ENCODE measurements at regions of chr1 and their contacts with region 1.

Region 1: DNA sequence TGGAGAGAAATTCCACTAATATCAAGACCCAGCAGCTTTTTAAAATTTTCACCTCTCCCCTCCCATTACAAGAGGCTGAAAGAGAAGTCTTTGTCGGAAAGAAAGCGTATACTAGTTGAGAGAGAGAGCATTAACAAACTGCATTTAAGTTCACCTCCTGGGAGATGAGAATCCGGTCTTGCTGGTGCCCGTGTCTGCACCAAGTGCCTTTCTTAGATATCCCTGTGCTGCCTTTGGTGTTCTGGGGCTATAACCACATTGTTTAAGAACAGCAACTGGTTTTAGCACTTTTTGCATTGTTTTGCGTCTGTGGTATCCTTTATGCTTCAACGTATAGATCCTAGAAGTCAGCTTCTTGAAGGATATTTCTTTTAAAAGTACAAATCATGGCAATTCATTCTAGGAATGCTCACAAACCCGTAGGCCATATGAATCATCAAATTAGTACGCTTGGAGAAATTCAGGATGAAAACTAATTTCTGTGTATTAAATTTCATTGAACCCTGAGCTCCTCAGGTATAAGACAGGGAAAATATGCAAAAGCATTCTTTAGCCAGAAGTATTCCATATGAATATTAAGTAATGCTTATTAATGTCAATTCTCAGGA is 3.4 kb upstream of the RPE65 start:
- DNase-seq: peak; percentile 83
- ATAC-seq: peak; percentile 31
- H3K4me3 ChIP-seq: no peak overlapping the region
- H3K27ac ChIP-seq: peak overlapping the region; percentile 22; the same call in 1 of the 2 replicates
- H3K4me1 ChIP-seq: peaks cover 20% of the 10 kb centered on the region
- H3K27me3 ChIP-seq: no peaks in the 10 kb centered on the region
- CTCF ChIP-seq: no peak

Region 2: DNA sequence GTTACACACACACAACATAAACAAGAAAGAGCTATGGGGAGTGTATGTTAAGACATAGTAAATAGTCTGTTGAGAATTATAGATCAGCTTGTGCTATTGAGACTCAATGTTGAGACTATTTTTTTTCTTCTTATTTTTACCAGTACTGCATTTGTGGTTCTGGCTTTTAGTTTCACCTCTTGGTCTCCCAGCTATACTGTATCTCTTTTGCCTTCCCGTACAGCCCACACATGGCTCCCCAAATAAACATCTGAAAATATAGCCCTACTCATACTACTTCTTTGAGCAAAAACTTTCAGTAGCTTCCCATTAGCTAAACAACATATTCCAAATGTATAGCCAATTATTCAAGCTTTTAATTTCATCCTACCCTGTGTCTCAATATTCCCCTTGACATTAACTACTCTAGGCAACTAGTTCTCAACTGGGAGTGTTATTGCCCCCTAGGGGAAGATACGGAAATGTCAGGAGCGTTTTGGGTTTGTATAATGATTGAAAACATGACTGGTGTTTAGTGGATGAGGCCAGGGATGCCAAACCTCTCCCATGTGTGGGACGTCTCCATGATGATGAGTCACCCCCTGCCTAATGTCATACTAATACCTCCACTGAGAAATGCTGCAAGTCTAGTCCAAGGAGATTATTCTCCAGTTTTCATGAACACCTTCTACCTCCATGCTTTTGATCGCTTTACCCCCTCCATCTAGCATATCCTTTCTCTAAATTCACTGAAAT is 10.2 kb before region 1 on chr1:
- CTCF ChIA-PET with region 1: interaction called, 10 read pairs
- POLR2A ChIA-PET with region 1: no interaction called
- intact Hi-C with region 1: no loop called
- DNase-seq: peak; percentile 94
- ATAC-seq: peak; percentile 74
- H3K4me3 ChIP-seq: no peak overlapping the region
- H3K27ac ChIP-seq: no peak overlapping the region
- H3K4me1 ChIP-seq: peaks cover 4% of the 10 kb centered on the region; the same call in 1 of the 2 replicates
- H3K27me3 ChIP-seq: no peaks in the 10 kb centered on the region
- CTCF ChIP-seq: peak; percentile 83